Activated CD8-positive, alpha-beta memory T cell treated with anti-CD3 and anti-CD28 coated beads, Interleukin-2, amount 10 ng/mL, durations not matched to agents 7 days and 5 days (primary cell): ENCODE measurements at regions of chr3 and their contacts with region 1.

Region 1: GRCh38 chr3:52123106-52123725 is 31.0 kb downstream of the POC1A start:
- DNase-seq: peak; percentile 74
- ATAC-seq: peak; percentile 80
- H3K4me3 Mint-ChIP-seq: no peak overlapping the region
- H3K27ac Mint-ChIP-seq: peak overlapping the region; percentile 13
- H3K4me1 Mint-ChIP-seq: peaks cover 16% of the 10 kb centered on the region
- H3K27me3 Mint-ChIP-seq: no peaks in the 10 kb centered on the region

Region 2: DNA sequence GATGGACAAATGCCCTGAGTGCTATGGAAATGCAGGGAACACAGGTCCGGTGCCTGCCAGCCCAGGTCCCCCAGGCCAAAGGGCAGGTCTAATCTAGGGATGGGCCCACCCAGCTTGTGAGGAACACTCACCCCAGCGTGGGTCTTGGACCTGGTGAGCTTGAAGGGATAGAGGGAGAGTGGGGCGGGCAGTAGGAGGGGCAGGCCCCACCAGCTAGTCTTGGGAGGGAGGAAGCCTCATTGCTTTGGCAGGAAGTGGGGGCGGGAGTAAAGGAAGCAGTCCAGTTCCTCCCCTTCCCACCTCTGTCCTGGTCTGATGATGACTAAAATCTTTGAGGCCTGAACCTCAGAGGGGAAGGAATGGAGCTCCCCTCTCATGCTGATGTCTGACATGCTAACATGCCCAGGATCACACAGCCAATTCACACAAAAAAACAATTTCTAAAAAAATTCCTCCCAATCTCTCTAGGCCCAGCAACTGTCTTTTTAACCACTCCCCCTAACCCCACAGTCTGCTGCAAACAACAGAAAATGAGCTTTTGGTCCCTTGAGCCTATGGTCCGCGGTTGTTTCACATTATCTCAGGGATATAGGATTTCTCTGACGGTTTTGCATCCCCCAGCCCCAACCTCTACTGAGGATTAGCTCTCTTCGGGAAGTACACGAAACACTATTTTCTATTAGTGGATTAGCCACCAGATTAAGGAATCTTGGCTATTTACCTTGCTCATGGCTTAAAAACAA is 36.1 kb before region 1 on chr3:
- CTCF ChIA-PET with region 1: interaction called, 10 read pairs
- DNase-seq: peak; percentile 46
- ATAC-seq: peak; percentile 34
- H3K4me3 Mint-ChIP-seq: no peak overlapping the region
- H3K27ac Mint-ChIP-seq: peak overlapping the region; percentile 69
- H3K4me1 Mint-ChIP-seq: peaks cover 37% of the 10 kb centered on the region
- H3K27me3 Mint-ChIP-seq: no peaks in the 10 kb centered on the region

Region 3: DNA sequence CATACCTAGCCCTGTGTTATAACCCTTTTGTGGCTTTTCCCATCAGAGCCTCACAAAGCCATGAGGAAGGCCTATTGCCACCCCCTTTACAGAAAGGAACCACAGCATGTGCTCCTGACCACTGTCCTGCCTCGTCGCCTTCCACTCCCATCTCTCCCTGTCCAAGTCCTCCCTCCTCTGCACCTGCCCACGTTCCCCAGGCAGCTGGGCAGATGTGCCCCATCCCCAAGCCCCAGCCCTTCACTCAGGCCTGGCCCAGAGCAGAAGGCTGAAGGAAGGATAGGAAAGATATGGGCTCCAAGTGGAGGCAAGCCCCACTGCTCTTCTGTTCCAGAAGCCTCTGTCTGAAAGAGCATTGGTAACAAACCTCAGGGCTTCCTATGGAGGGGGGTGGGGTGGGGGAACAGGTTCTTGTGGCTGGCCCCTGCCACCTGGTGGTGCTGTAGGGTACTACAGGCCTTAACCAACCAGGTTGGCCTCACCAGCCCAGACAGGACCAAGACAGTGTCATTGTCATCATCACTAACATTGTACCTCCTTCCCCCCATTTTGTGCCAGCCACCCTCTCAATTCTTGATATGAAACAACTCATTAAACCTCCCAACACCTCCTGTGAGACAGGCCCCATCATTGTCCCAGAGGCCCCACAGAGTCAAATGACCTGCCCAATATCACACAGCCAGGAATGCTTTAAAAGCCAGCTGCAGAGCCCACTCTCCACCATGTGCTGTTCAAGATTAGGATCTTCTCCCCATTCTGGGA is 21.0 kb after region 1 on chr3:
- CTCF ChIA-PET with region 1: interaction called, 12 read pairs
- DNase-seq: peak; percentile 91
- ATAC-seq: peak; percentile 94
- H3K4me3 Mint-ChIP-seq: no peak overlapping the region
- H3K27ac Mint-ChIP-seq: peak overlapping the region; percentile 59
- H3K4me1 Mint-ChIP-seq: peaks cover 11% of the 10 kb centered on the region
- H3K27me3 Mint-ChIP-seq: no peaks in the 10 kb centered on the region